Caco-2 (cell line): ENCODE measurements at regions of chr13 and their contacts with region 1.

Region 1: GRCh38 chr13:92838786-92839185 is 387.8 kb upstream of the GPC6 start:
- DNase-seq: no peak
- H3K4me3 ChIP-seq: no peak overlapping the region
- H3K4me3 Mint-ChIP-seq: no peak overlapping the region
- H3K27ac Mint-ChIP-seq: no peak overlapping the region
- H3K4me1 ChIP-seq: no peaks in the 10 kb centered on the region
- H3K4me1 Mint-ChIP-seq: no peaks in the 10 kb centered on the region
- H3K27me3 ChIP-seq: no peaks in the 10 kb centered on the region
- H3K27me3 Mint-ChIP-seq: no peaks in the 10 kb centered on the region
- CTCF ChIP-seq: no peak

Region 2: DNA sequence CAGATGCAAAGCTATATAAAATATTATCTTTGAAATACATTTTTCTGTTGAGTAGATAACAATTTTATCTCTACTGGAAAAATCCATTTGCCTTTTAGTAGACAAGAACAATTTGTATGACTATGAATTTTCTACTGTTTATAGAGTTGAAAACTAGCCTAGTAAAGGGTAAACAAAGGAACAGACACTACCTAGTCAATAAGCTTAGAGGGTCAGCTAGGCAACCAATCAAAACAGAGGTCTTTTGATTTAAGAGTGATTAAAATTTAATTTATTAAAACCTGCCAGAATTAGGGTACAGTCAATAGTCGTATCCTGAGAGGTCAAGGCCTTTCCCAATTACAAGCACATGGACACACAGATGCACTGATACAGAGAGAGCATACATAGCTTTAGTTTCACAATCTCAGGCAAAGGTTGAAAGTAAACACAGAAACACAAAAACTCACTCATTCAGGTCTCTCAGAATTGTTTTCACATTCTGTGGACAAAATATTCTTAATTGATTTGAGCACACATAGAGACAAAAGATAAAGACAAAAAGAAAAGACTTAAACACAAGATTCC is 363.3 kb after region 1 on chr13:
- CTCF ChIA-PET with region 1: no interaction called
- POLR2A ChIA-PET with region 1: no interaction called
- intact Hi-C with region 1: loop called (anchors 5 kb)
- DNase-seq: no peak
- H3K4me3 ChIP-seq: no peak overlapping the region
- H3K4me3 Mint-ChIP-seq: no peak overlapping the region
- H3K27ac Mint-ChIP-seq: no peak overlapping the region
- H3K4me1 ChIP-seq: no peaks in the 10 kb centered on the region
- H3K4me1 Mint-ChIP-seq: peaks cover 6% of the 10 kb centered on the region
- H3K27me3 ChIP-seq: no peaks in the 10 kb centered on the region
- H3K27me3 Mint-ChIP-seq: no peaks in the 10 kb centered on the region
- CTCF ChIP-seq: no peak